ENCODE measurements at regions of chr16 and their contacts with region 1.

Region 1: GRCh38 chr16:76900285-76901263 is 290.4 kb upstream of the MON1B start:
- DNase-seq: no peak
- ATAC-seq: no peak
- H3K4me3 ChIP-seq: no peak overlapping the region
- H3K27ac ChIP-seq: no peak overlapping the region
- H3K4me1 ChIP-seq: no peaks in the 10 kb centered on the region
- H3K27me3 ChIP-seq: no peaks in the 10 kb centered on the region
- CTCF ChIP-seq: no peak
- EP300 ChIP-seq: no peak
- POLR2A ChIP-seq: no peak
- RAD21 ChIP-seq: no peak

Region 2: DNA sequence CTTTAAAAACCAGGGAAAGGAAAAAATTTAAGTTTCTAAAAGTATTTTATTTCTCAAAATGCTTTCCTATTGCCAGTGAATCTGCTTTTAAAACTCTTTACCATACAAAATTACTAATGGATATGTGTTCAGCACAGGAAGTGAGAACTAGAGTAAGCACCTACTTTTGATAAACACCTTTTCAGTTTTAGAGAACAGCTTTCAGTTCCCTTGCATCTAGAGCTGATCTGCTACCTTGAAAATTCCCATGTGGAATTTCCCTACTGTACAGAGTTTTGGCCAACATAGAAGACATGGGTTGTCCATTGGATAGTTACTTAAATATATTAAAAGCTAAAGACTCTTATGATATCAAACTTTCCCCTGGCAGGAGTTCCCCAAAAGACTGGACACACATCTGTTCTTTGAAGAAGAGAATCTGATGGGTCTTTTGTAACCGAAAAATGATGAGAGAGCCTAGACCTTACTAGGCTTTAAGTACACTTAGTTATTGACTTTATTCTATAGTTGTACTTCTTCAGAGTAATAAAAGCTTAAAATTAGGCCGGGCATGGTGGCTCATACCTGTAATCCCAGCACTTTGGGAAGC is 735.5 kb before region 1 on chr16:
- CTCF ChIA-PET with region 1: no interaction called
- POLR2A ChIA-PET with region 1: no interaction called
- in situ Hi-C with region 1: no loop called
- intact Hi-C with region 1: loop called (anchors 5 kb)
- DNase-seq: no peak
- ATAC-seq: no peak
- H3K4me3 ChIP-seq: no peak overlapping the region
- H3K27ac ChIP-seq: no peak overlapping the region
- H3K4me1 ChIP-seq: no peaks in the 10 kb centered on the region
- H3K27me3 ChIP-seq: no peaks in the 10 kb centered on the region
- CTCF ChIP-seq: no peak
- EP300 ChIP-seq: no peak
- POLR2A ChIP-seq: no peak
- RAD21 ChIP-seq: no peak

Region 3: GRCh38 chr16:77090062-77090461 is 189.5 kb after region 1 on chr16:
- CTCF ChIA-PET with region 1: no interaction called
- POLR2A ChIA-PET with region 1: no interaction called
- in situ Hi-C with region 1: no loop called
- intact Hi-C with region 1: no loop called
- DNase-seq: no peak
- ATAC-seq: no peak
- H3K4me3 ChIP-seq: no peak overlapping the region
- H3K27ac ChIP-seq: no peak overlapping the region
- H3K4me1 ChIP-seq: no peaks in the 10 kb centered on the region
- H3K27me3 ChIP-seq: no peaks in the 10 kb centered on the region
- CTCF ChIP-seq: no peak
- EP300 ChIP-seq: no peak
- POLR2A ChIP-seq: no peak
- RAD21 ChIP-seq: no peak